Activated CD4-positive, alpha-beta T cell treated with anti-CD3 and anti-CD28 coated beads for 36 hours (primary cell): ENCODE measurements at regions of chr2 and their contacts with region 1.

Region 1: GRCh38 chr2:198053776-198054698 is 249.6 kb downstream of the PLCL1 start:
- DNase-seq: peak; percentile 70
- ATAC-seq: peak; percentile 95
- H3K4me3 Mint-ChIP-seq: no peak overlapping the region
- H3K27ac Mint-ChIP-seq: peak overlapping the region; percentile 7
- H3K4me1 Mint-ChIP-seq: peaks cover 29% of the 10 kb centered on the region
- H3K27me3 Mint-ChIP-seq: no peaks in the 10 kb centered on the region

Region 2: DNA sequence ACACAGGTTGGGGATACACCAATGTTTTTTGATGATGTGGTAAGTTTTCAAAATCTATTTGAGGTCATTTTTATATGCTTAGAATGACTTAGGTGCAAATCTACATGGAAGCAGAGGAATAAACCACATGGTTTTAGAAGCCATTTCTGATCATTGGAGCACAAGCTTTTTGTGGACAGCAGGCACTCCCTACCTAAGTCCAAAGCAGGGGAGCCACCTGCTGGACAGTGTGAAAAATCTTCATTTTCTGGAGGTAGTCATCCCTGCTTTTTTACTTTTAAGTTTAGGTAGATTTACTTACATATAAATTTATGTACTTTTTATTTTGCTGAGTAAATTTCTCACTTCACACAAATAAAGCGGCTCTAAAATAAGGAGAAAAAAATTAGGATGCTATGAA is 73.6 kb after region 1 on chr2:
- CTCF ChIA-PET with region 1: interaction called, 4 read pairs
- POLR2A ChIA-PET with region 1: no interaction called
- intact Hi-C with region 1: loop called in 1 of 2 experiments (anchors 5 kb)
- DNase-seq: peak; percentile 71
- ATAC-seq: peak; percentile 72
- H3K4me3 Mint-ChIP-seq: no peak overlapping the region
- H3K27ac Mint-ChIP-seq: no peak overlapping the region
- H3K4me1 Mint-ChIP-seq: peaks cover 8% of the 10 kb centered on the region
- H3K27me3 Mint-ChIP-seq: no peaks in the 10 kb centered on the region